AG04450 (cell line): ENCODE measurements at regions of chr3 and their contacts with region 1.

Region 1: GRCh38 chr3:116770815-116771450 is 61.4 kb downstream of the TUSC7 start:
- DNase-seq: peak; percentile 50
- H3K4me3 ChIP-seq: no peak overlapping the region
- H3K27ac ChIP-seq: no peak overlapping the region
- H3K27me3 ChIP-seq: no peaks in the 10 kb centered on the region
- CTCF ChIP-seq: peak; percentile 99

Region 2: DNA sequence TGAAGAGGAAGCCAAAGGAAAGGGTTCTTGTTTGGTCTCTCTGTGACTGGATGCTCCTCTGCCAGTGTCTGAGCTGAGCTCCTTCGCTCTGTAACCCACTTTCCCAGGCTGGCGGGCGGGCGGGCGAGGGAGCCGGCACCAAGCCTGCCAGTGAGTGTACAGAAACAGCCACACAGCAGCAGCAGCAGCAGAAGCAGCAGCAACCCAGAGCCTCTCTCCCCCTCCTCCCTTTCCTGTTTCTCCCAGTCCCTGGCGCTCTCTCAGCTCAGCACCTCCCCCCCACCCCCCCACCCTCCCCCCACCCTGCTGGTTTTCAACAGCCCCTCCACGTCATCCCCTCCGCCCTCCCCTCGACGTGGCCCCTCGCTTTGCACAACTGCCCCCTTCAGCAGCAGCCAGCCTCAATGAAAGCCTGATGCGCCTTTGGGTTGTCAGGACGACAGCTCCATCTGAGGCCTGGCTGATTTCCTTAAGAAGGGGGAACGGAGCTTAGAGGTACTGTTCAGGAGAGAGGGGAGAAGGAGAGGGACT is 325.6 kb before region 1 on chr3 and contains the start of gene LSAMP:
- CTCF ChIA-PET with region 1: no interaction called
- POLR2A ChIA-PET with region 1: no interaction called
- DNase-seq: no peak
- H3K4me3 ChIP-seq: peak within 1 kb of the TSS; percentile 68
- H3K27ac ChIP-seq: no peak within 1 kb of the TSS
- H3K27me3 ChIP-seq: no peaks in the 10 kb centered on the region
- CTCF ChIP-seq: no peak
- polyA plus RNA-seq, gene LSAMP: 24.1 and 25.1 TPM in 2 replicates

Region 3: DNA sequence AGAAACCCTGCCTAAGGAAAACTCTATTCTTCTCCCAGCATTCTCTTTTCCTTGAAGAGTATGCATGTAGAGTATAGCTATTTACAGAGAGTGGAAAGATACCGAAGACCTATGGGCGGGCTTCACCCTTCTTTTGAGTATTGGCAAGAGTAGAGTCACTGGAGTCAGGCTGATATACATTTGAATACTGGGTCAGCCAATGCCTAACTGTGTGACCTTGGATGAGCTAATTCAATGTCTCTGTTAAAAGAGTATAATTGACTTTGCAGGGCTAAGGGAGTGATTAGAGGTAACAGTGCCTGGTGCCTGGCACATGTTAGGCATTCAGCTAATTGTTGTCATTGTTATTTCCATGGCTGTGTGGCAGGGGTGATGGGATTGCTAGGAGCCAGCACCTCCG is 14.3 kb after region 1 on chr3:
- CTCF ChIA-PET with region 1: interaction called, 32 read pairs
- POLR2A ChIA-PET with region 1: no interaction called
- DNase-seq: no peak
- H3K4me3 ChIP-seq: no peak overlapping the region
- H3K27ac ChIP-seq: no peak overlapping the region
- H3K27me3 ChIP-seq: no peaks in the 10 kb centered on the region
- CTCF ChIP-seq: no peak

Region 4: DNA sequence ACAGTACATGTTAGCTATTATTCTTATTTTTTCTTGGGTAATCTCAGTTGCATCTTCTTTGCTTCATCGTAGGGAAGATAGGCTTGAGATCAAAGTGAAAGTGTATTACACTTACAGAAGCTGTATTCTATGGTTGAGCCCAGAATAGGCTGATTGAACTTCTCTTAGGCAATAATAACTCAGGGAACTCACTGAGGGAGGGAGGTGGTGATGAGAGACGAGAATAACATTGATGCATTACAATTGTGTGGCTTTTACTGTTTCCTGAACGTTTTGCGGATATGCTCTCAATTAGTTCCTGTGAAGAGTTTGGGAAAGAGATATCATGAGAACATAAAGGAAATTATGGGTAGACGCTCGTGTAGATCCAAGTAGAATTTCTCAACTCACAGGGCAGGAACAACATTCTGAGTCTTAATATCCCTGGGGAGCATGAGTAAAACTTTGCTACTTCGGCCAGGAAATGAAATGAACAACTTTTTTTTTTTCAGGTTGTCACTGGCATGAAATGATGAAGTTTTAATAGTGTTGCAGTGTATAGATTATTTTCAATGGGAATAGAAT is 240.8 kb after region 1 on chr3:
- CTCF ChIA-PET with region 1: interaction called, 15 read pairs
- POLR2A ChIA-PET with region 1: no interaction called
- DNase-seq: no peak
- H3K4me3 ChIP-seq: no peak overlapping the region
- H3K27ac ChIP-seq: no peak overlapping the region
- H3K27me3 ChIP-seq: no peaks in the 10 kb centered on the region
- CTCF ChIP-seq: no peak

Region 5: GRCh38 chr3:117526470-117527079 is 755.6 kb after region 1 on chr3:
- CTCF ChIA-PET with region 1: interaction called, 37 read pairs
- POLR2A ChIA-PET with region 1: no interaction called
- DNase-seq: no peak
- H3K4me3 ChIP-seq: no peak overlapping the region
- H3K27ac ChIP-seq: no peak overlapping the region
- H3K27me3 ChIP-seq: no peaks in the 10 kb centered on the region
- CTCF ChIP-seq: peak; percentile 70

Region 6: DNA sequence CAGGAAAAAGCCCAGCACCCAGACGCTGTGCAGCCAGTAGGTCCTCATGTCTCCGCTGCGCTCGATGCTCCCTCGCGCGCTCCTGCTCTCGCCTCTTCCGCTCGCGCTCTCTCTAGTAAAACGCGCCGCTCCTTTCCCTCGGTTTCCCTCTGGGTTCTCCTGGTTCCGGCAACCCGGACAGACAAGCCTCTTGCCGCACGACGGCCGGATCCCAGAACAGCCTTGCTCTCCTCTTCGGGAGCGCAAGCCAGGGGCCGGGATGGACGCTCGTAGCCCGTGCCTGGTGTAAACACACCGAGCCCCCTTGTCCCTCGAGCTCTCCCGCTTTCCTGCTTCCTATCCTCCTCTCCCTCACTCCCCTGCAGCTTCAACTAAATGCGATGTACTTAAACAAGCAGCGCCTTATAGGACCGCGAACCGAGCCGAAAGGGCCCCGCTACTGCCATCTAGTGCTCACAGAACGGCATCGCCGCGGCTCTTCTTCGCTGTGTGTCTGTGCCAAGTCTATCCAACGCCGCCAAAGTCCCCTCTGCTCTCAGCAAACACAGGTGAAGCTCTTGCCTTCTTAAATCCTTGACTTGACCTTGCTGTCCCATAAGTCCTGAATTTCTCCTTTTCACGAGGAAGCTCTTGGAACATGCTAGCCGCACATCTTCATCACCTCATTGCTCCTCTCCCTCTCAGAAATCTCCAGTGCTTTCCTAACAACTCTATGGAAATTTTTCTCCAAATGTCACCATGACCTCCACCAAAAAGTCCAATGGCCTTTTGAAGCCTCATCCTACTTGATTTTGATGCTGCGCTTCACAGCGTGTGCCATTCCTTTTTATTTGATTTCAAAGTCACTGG is 1226.5 kb after region 1 on chr3:
- CTCF ChIA-PET with region 1: interaction called, 16 read pairs
- POLR2A ChIA-PET with region 1: no interaction called
- DNase-seq: peak; percentile 70
- H3K4me3 ChIP-seq: peak overlapping the region; percentile 96
- H3K27ac ChIP-seq: peak overlapping the region; percentile 13
- H3K27me3 ChIP-seq: no peaks in the 10 kb centered on the region
- CTCF ChIP-seq: peak; percentile 98